Activated CD4-positive, alpha-beta memory T cell treated with anti-CD3 and anti-CD28 coated beads, Interleukin-2, amount 10 ng/mL, durations not matched to agents 7 days and 5 days (primary cell): ENCODE measurements at regions of chr7 and their contacts with region 1.

Region 1: GRCh38 chr7:43612599-43613589 is 30.0 kb downstream of the STK17A start:
- DNase-seq: no peak
- H3K4me3 Mint-ChIP-seq: no peak overlapping the region
- H3K27ac Mint-ChIP-seq: peak overlapping the region; percentile 79
- H3K4me1 Mint-ChIP-seq: peaks cover 46% of the 10 kb centered on the region
- H3K27me3 Mint-ChIP-seq: no peaks in the 10 kb centered on the region

Region 2: GRCh38 chr7:43590862-43591550 is 21.9 kb before region 1 on chr7:
- CTCF ChIA-PET with region 1: no interaction called
- POLR2A ChIA-PET with region 1: interaction called, 14 read pairs
- DNase-seq: peak; percentile 46
- H3K4me3 Mint-ChIP-seq: peak overlapping the region; percentile 5
- H3K27ac Mint-ChIP-seq: no peak overlapping the region
- H3K4me1 Mint-ChIP-seq: peaks cover 79% of the 10 kb centered on the region
- H3K27me3 Mint-ChIP-seq: no peaks in the 10 kb centered on the region